ENCODE measurements at regions of chr14 and their contacts with region 1.

Region 1: DNA sequence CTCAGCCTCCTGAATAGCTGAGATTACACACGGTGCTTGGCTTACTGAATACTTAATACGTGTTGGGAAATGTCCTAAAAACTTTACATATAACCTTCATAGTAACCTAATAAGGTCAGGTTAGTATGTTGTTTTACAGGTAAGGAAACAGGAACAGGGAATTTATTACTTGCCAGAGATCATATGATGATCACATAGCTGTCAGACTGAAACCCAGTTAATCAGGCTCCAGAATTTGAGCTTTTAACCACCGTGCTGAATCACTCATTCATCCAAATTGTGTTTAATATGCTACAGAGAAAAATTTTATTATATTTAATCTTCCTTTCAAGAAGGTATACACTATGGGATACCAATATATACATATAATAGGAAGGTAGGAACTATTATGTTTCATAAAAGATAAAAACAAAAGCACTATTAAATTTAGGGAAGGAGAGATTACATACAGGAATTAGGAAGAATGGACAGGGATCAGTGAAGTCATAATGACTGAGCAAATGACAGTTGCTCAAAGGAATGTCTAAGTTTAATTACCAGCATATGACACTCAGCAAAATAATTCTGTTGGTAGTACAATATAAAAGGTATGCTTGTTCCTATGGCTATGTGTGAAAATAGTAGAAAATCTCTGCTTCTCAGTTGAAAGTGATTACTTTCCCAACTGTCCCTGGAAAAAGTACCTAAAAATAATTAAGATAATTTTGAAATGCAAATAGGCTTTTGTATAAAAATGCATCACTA is 59.3 kb downstream of the HEATR5A start:
- DNase-seq: no peak
- H3K4me3 Mint-ChIP-seq: no peak overlapping the region
- H3K27ac Mint-ChIP-seq: no peak overlapping the region
- H3K4me1 Mint-ChIP-seq: no peaks in the 10 kb centered on the region
- H3K27me3 Mint-ChIP-seq: no peaks in the 10 kb centered on the region

Region 2: DNA sequence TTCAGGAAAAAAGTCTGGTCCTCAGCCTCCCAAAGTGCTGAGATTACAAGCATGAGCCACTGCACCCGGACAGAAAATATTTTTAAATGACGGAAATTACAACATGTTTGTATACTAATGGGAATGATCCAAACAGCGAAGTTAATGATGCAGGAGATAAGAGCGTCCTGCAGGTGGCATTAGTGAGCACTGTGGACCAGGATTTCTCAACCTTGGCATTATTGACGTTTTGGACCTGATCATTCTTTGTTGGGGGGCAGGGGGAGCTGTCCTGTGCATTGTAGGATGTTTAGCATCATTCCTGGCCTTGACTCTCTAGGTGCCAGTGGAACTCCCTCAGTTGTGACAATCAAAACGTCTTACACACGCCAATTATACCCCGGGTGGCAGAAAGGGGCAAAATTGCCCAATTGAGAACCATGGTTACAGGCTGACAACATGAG is 704.9 kb before region 1 on chr14:
- CTCF ChIA-PET with region 1: no interaction called
- intact Hi-C with region 1: loop called (anchors 2 kb)
- DNase-seq: peak; percentile 32
- H3K4me3 Mint-ChIP-seq: no peak overlapping the region
- H3K27ac Mint-ChIP-seq: no peak overlapping the region
- H3K4me1 Mint-ChIP-seq: no peaks in the 10 kb centered on the region
- H3K27me3 Mint-ChIP-seq: no peaks in the 10 kb centered on the region

Region 3: GRCh38 chr14:30982533-30982932 is 378.6 kb before region 1 on chr14:
- CTCF ChIA-PET with region 1: no interaction called
- intact Hi-C with region 1: loop called (anchors 1 kb)
- DNase-seq: no peak
- H3K4me3 Mint-ChIP-seq: no peak overlapping the region
- H3K27ac Mint-ChIP-seq: no peak overlapping the region
- H3K4me1 Mint-ChIP-seq: peaks cover 16% of the 10 kb centered on the region
- H3K27me3 Mint-ChIP-seq: no peaks in the 10 kb centered on the region

Region 4: GRCh38 chr14:31096255-31096654 is 264.8 kb before region 1 on chr14:
- CTCF ChIA-PET with region 1: interaction called, 3 read pairs
- intact Hi-C with region 1: loop called (anchors 5 kb)
- DNase-seq: no peak
- H3K4me3 Mint-ChIP-seq: no peak overlapping the region
- H3K27ac Mint-ChIP-seq: no peak overlapping the region
- H3K4me1 Mint-ChIP-seq: no peaks in the 10 kb centered on the region
- H3K27me3 Mint-ChIP-seq: no peaks in the 10 kb centered on the region

Region 5: GRCh38 chr14:31159682-31160296 is 201.3 kb before region 1 on chr14:
- CTCF ChIA-PET with region 1: no interaction called
- intact Hi-C with region 1: no loop called
- DNase-seq: no peak
- H3K4me3 Mint-ChIP-seq: no peak overlapping the region
- H3K27ac Mint-ChIP-seq: no peak overlapping the region
- H3K4me1 Mint-ChIP-seq: no peaks in the 10 kb centered on the region
- H3K27me3 Mint-ChIP-seq: no peaks in the 10 kb centered on the region

Measured in activated naive CD4-positive, alpha-beta T cell treated with anti-CD3 and anti-CD28 coated beads for 36 hours (primary cell).